SK-N-SH (cell line): ENCODE measurements at regions of chr4 and their contacts with region 1.

Region 1: DNA sequence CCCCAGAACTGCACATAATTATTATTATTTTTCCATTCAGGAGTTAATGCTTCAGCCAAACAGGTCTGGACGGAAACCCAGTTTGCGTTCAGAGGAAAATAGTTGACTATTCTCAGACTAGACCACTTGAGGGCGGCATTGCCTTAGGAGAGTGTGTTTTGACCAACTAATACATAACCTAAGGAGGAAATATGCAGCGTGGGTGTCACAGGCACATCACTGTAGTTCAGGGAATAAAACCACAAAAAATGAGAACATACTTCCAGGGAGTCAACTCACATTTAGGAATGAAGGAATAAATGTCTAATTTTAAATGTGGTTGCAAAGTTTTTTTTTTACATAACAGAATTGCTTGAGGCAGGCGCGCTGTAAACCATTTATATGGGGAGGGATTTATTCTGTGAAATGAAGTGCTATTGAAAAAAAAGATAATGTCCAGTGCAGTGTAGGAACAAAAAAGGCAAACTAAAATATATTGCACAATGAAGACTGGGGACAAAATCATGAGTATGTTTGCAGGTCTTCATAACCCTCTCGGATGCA is 93.3 kb downstream of the SYNPO2 start:
- DNase-seq: peak; percentile 73
- H3K4me3 ChIP-seq: no peak overlapping the region
- H3K27ac ChIP-seq: peak overlapping the region in 1 of 2 experiments; percentile 28; a peak in 1 of 4 replicates
- H3K4me1 ChIP-seq: peaks cover 5 to 9% of the 10 kb centered on the region in 2 experiments
- H3K27me3 ChIP-seq: no peaks in the 10 kb centered on the region
- CTCF ChIP-seq: peak; percentile 87
- EP300 ChIP-seq: no peak
- RAD21 ChIP-seq: peak; percentile 97

Region 2: DNA sequence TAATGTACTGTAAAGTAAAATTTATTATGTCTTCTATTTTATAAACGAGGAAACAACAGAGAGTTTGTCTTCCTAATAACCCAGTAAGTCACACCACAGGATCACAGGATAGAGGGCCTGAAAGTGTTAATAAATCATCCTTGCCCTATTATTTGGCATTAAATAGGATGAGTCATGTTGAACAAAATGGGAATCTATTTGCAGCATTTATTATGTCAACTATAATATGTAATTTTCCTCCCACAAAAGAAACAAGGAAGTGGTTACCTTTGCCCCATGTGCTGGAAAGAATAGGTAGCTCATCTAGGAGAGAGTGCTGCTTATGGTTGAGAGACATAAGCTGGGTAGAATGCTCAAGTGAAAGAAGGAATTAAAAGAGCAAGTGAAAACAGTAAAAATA is 1185.2 kb before region 1 on chr4:
- CTCF ChIA-PET with region 1: no interaction called
- POLR2A ChIA-PET with region 1: no interaction called
- DNase-seq: no peak
- H3K4me3 ChIP-seq: no peak overlapping the region
- H3K27ac ChIP-seq: no peak overlapping the region
- H3K4me1 ChIP-seq: no peaks in the 10 kb centered on the region
- H3K27me3 ChIP-seq: no peaks in the 10 kb centered on the region
- CTCF ChIP-seq: no peak
- EP300 ChIP-seq: no peak
- RAD21 ChIP-seq: no peak

Region 3: GRCh38 chr4:118883861-118884260 is 98.0 kb before region 1 on chr4:
- CTCF ChIA-PET with region 1: no interaction called
- POLR2A ChIA-PET with region 1: no interaction called
- DNase-seq: peak; percentile 44
- H3K4me3 ChIP-seq: no peak overlapping the region
- H3K27ac ChIP-seq: no peak overlapping the region; a peak in 2 of 4 replicates
- H3K4me1 ChIP-seq: peaks cover 0 to 3% of the 10 kb centered on the region in 2 experiments; a peak in 2 of 4 replicates
- H3K27me3 ChIP-seq: no peaks in the 10 kb centered on the region
- CTCF ChIP-seq: peak; percentile 42
- EP300 ChIP-seq: no peak
- RAD21 ChIP-seq: peak; percentile 29

Region 4: DNA sequence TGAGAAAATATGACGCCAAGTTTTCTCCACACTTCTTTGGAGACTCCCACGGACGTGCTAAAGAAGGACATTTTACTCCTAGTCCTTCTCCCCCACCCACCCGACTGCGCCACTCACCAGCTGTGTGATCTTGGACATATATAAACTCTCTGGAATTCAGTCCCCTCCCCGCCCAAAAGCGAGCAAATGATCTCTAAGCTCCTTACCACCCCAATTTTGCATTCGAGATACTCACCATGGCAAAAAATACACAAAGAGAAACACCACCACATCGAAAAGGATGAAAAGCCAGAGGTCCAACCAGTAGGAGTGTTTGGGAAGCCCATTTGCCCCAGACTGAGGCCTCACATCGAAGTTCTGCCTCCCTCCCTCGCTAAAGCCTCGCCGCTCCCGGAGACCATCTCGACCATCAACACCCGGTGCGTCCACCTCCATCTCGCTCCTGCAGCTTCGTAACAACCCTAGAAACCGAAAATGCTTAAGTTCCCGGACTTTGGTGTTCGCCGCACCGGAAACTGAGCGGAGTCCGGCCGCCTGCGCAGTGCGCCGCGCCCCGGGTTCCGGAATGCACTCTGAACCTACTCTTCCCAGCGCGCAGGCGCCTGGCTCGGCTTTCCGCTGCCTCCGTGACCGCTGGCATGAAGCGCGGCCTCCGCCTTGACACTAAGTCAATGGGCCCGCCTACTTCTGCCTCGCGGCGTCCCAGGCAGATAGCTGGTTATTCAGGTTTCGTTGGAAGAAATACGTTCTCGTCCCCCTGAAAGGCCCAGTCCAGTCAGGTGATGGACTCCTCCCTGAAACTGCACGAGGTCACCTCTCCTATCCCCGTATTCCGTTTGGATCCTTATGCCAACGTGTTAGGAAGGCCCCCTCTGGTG is 318.4 kb after region 1 on chr4:
- CTCF ChIA-PET with region 1: interaction called, 10 read pairs
- POLR2A ChIA-PET with region 1: no interaction called
- DNase-seq: peak; percentile 87
- H3K4me3 ChIP-seq: peak overlapping the region; percentile 82 to 87
- H3K27ac ChIP-seq: peak overlapping the region; percentile 91 to 95
- H3K4me1 ChIP-seq: peaks cover 0 to 7% of the 10 kb centered on the region in 2 experiments; a peak in 2 of 4 replicates
- H3K27me3 ChIP-seq: no peaks in the 10 kb centered on the region
- CTCF ChIP-seq: peak; percentile 17; the same call in 1 of the 2 replicates
- EP300 ChIP-seq: no peak
- RAD21 ChIP-seq: no peak